HCT116 (cell line): ENCODE measurements at regions of chr4 and their contacts with region 1.

Region 1: DNA sequence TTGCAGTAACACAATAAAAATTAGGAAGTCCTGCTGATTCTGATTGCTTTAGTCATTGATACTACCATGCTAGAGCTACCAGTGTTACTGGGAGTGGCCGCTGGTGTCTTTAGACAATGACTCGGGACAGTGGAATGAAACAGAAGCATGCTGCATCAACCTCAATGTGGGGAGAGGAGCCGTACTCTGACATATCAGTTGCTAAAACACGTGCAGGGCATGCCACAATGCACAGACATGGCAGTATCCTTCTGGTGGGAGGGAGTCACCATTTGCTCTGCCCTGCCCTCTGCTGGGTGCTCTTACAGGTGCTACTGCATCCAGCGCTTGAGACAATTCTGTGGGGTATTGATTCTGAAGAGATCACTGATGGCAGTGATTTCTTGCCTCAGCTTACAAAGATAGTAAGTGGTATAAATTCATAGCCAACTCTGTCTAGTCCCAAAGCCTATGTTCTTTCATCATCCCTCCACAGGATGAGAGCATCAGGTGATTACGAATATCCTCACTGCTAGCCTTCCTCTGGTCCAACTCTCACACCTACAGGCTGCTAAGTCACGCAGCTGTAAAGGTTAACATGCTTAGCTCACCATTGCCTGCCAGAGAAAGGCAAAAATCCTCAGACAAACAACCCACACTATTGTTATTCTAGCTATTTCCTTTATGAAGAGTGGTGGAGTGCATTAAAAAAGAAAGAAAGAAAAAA is 43.7 kb downstream of the NSG1 start:
- DNase-seq: peak; percentile 39
- ATAC-seq: peak; percentile 90
- H3K4me3 ChIP-seq: no peak overlapping the region
- H3K27ac ChIP-seq: no peak overlapping the region
- H3K4me1 ChIP-seq: peaks cover 0 to 27% of the 10 kb centered on the region in 2 experiments; a peak in 1 of 4 replicates
- H3K27me3 ChIP-seq: no peaks in the 10 kb centered on the region
- CTCF ChIP-seq: peak; percentile 43 to 90 (median 80); a peak in 5 of 6 replicates
- POLR2A ChIP-seq: no peak
- RAD21 ChIP-seq: peak; percentile 59

Region 2: DNA sequence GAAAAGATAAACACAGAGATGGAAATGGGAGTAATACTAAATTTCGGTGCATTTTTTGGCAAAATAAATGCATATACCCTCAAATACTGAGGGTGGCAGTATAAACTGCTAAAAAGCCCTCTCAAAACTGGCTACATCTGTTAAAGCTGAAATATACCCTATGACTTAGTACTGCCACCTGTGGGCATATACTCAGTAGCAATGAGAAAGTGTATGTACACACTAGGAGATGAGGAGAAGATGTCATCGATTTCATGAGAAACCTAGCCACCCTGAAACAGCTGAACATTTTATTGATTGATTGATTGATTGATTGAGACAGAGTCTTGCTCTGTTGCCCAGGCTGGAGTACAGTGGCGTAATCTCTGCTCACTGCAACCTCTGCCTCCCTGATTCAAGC is 170.4 kb before region 1 on chr4:
- CTCF ChIA-PET with region 1: interaction called, 14 read pairs
- POLR2A ChIA-PET with region 1: interaction called, 3 read pairs
- RAD21 ChIA-PET with region 1: no interaction called
- intact Hi-C with region 1: loop called (anchors 1 kb)
- DNase-seq: peak; percentile 74
- ATAC-seq: peak; percentile 98
- H3K4me3 ChIP-seq: no peak overlapping the region
- H3K27ac ChIP-seq: no peak overlapping the region
- H3K4me1 ChIP-seq: no peaks in the 10 kb centered on the region
- H3K27me3 ChIP-seq: no peaks in the 10 kb centered on the region
- CTCF ChIP-seq: peak; percentile 52 to 96 (median 74)
- POLR2A ChIP-seq: no peak
- RAD21 ChIP-seq: peak; percentile 80